HCT116 (cell line): ENCODE measurements at regions of chr15 and their contacts with region 1.

Region 1: DNA sequence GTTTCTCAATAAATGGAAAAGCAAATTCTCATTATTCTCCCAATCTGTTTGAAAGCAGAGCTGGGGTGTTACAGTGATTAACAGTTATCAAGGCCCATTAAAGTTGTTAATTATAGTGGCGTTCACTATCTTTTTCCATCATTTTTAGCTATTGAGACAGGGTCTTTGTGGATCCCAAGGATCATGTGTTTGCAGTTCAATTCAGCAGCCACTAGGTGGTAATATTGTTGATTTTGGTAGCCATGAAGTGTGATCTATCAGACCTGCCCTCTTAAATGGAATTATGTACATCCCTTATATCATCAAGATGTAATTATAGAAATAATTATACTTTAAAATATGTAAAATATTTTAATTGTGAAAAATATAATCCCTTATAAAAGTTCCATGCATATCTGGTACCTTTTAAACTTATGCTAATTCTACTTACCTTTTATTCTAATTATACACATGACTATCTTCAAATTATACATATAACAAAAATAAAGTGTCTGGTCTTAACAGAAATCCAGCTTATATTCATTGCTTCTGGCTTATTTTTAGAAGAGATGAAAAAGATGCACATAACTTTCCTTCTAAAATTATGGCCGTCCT is 126.4 kb downstream of the GREM1 start:
- DNase-seq: peak; percentile 40
- ATAC-seq: peak; percentile 61
- H3K4me3 ChIP-seq: no peak overlapping the region
- H3K27ac ChIP-seq: no peak overlapping the region
- H3K4me1 ChIP-seq: no peaks in the 10 kb centered on the region
- H3K27me3 ChIP-seq: peaks cover 18% of the 10 kb centered on the region; the same call in 1 of the 2 replicates
- CTCF ChIP-seq: peak; percentile 45 to 69 (median 68); a peak in 5 of 6 replicates
- POLR2A ChIP-seq: no peak
- RAD21 ChIP-seq: peak; percentile 61

Region 2: GRCh38 chr15:32657198-32657883 is 186.9 kb before region 1 on chr15:
- CTCF ChIA-PET with region 1: interaction called, 12 read pairs
- POLR2A ChIA-PET with region 1: no interaction called
- RAD21 ChIA-PET with region 1: no interaction called
- intact Hi-C with region 1: no loop called
- DNase-seq: no peak
- ATAC-seq: no peak
- H3K4me3 ChIP-seq: no peak overlapping the region
- H3K27ac ChIP-seq: no peak overlapping the region
- H3K4me1 ChIP-seq: no peaks in the 10 kb centered on the region
- H3K27me3 ChIP-seq: no peaks in the 10 kb centered on the region
- CTCF ChIP-seq: no peak
- POLR2A ChIP-seq: no peak
- RAD21 ChIP-seq: no peak

Region 3: DNA sequence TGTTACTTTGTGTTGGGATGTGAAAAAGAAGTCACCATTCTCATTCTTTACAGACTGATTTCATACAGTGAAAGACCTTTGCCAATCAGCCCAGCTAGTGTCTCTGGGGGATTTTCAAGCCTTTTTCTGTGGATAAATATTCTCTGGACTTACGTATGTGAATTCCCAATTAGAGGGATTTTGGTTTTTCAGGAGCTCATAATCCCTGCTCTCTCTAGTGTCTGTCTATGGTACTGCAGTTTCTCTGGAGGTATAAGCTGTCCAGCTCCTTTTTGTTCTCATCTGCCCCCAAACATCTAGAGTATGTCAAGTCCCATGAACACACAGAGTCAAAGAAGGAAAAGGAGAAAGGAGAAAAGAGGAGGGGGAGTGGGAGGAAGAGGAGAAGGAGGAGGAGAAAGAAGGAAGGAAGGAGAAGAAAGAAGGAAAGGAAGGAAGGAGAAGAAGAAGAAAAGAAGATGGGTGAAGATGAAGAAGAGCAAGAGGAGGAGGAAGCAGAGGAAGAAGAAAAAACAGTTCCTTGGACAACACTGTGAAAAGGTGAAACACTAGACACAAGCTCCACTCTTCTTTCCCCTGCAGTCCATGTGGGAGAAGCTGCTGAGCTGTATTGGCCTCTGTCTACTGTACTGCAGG is 92.2 kb after region 1 on chr15:
- CTCF ChIA-PET with region 1: interaction called, 31 read pairs
- POLR2A ChIA-PET with region 1: no interaction called
- RAD21 ChIA-PET with region 1: interaction called, 4 to 6 read pairs
- intact Hi-C with region 1: loop called (anchors 1 kb)
- DNase-seq: peak; percentile 33
- ATAC-seq: peak; percentile 84
- H3K4me3 ChIP-seq: no peak overlapping the region
- H3K27ac ChIP-seq: no peak overlapping the region
- H3K4me1 ChIP-seq: no peaks in the 10 kb centered on the region
- H3K27me3 ChIP-seq: no peaks in the 10 kb centered on the region
- CTCF ChIP-seq: peak; percentile 40 to 72 (median 68); a peak in 5 of 6 replicates
- POLR2A ChIP-seq: no peak
- RAD21 ChIP-seq: peak; percentile 43

Region 4: DNA sequence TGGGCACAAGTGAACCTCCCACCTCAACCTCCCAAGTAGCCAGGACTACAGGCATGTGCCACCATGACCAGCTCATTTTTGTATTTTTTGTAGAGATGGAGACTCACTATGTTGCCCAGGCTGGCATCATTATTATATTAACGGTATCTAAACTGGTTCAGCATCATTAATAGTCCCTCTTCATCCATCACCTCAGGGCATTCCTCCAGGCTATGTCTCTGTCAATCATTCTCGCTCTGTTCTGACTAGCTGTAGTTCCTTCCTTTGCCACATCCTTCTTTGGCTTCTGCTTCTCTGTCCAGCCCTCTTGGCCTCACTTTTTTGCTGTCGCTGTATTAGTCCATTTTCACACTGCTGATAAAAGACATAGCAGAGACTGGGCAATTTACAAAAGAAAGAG is 407.1 kb after region 1 on chr15:
- CTCF ChIA-PET with region 1: no interaction called
- POLR2A ChIA-PET with region 1: no interaction called
- RAD21 ChIA-PET with region 1: no interaction called
- intact Hi-C with region 1: no loop called
- DNase-seq: no peak
- ATAC-seq: no peak
- H3K4me3 ChIP-seq: no peak overlapping the region
- H3K27ac ChIP-seq: no peak overlapping the region
- H3K4me1 ChIP-seq: no peaks in the 10 kb centered on the region
- H3K27me3 ChIP-seq: peaks cover 20% of the 10 kb centered on the region
- CTCF ChIP-seq: no peak
- POLR2A ChIP-seq: no peak
- RAD21 ChIP-seq: no peak